Naive thymus-derived CD8-positive, alpha-beta T cell (primary cell): ENCODE measurements at regions of chr3 and their contacts with region 1.

Region 1: GRCh38 chr3:186930641-186931531 is 560 bp downstream of the ST6GAL1 start:
- DNase-seq: peak; percentile 41 to 84 (median 65)
- ATAC-seq: peak; percentile 80
- H3K4me3 Mint-ChIP-seq: peak overlapping the region; percentile 95 to 100 (median 99)
- H3K27ac Mint-ChIP-seq: peak overlapping the region; percentile 93 to 97 (median 96)
- H3K4me1 Mint-ChIP-seq: peaks cover 26 to 51% (median 43%) of the 10 kb centered on the region in 4 donors
- H3K27me3 Mint-ChIP-seq: no peaks in the 10 kb centered on the region

Region 2: DNA sequence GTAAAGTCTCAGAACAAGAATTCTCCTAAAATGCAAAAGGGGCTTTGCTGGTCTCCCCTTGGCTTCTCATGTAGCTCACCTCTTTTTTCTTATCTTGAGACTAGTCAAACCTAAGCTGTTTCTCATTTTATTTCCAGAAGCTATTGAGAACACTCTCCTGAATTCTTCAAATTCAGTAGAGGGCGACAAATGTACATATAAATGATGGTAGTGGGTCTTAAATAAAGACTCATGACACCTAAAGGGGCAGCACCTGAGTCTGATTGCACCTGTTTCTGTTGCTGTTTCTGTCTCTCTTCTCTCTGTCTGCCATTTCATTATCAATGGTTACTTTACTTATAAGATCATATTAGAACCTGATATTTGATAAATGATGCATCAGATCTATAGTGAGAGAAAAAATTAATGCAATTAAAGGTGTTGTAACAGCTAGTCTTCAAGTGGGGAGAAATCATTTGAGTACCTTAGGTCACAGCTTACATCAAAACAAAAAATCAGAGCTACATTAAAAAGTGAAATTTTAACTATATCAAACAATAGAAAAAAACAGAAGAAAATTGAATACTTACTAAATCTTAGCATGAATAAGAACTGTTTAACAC is 81.4 kb before region 1 on chr3:
- POLR2A ChIA-PET with region 1: interaction called, 58 read pairs
- DNase-seq: peak in 5 of 10 donors; percentile 13 to 77 (median 60)
- ATAC-seq: peak; percentile 99 to 100
- H3K4me3 Mint-ChIP-seq: peak overlapping the region in 1 of 10 donors; percentile 41
- H3K27ac Mint-ChIP-seq: peak overlapping the region in 6 of 10 donors; percentile 51 to 84 (median 71)
- H3K4me1 Mint-ChIP-seq: peaks cover 12 to 29% (median 19%) of the 10 kb centered on the region in 4 donors
- H3K27me3 Mint-ChIP-seq: peaks cover 0 to 6% (median 5%) of the 10 kb centered on the region in 5 donors

Region 3: DNA sequence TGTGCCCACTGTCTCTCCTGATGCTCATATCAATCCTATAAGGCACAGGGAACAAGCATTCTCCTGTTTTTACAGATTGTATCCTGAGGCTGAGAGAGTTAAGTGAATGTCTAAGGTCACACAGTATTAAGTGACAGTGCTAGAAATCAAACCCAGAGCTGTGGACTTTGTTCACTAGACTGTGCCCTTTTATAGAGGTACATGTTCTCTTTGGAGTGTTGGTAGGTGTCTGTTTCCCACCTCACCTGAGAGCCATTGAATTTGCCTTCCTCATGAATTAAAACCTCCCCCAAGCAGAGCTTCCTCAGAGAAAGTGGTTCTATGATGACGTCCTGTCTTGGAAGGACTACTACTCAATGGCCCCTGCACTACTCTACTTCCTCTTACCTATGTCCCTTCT is 75.9 kb before region 1 on chr3:
- POLR2A ChIA-PET with region 1: interaction called, 58 read pairs
- DNase-seq: no peak
- ATAC-seq: no peak
- H3K4me3 Mint-ChIP-seq: no peak overlapping the region
- H3K27ac Mint-ChIP-seq: peak overlapping the region in 2 of 10 donors; percentile 17 to 54
- H3K4me1 Mint-ChIP-seq: peaks cover 10 to 21% (median 16%) of the 10 kb centered on the region in 4 donors
- H3K27me3 Mint-ChIP-seq: no peaks in the 10 kb centered on the region

Region 4: DNA sequence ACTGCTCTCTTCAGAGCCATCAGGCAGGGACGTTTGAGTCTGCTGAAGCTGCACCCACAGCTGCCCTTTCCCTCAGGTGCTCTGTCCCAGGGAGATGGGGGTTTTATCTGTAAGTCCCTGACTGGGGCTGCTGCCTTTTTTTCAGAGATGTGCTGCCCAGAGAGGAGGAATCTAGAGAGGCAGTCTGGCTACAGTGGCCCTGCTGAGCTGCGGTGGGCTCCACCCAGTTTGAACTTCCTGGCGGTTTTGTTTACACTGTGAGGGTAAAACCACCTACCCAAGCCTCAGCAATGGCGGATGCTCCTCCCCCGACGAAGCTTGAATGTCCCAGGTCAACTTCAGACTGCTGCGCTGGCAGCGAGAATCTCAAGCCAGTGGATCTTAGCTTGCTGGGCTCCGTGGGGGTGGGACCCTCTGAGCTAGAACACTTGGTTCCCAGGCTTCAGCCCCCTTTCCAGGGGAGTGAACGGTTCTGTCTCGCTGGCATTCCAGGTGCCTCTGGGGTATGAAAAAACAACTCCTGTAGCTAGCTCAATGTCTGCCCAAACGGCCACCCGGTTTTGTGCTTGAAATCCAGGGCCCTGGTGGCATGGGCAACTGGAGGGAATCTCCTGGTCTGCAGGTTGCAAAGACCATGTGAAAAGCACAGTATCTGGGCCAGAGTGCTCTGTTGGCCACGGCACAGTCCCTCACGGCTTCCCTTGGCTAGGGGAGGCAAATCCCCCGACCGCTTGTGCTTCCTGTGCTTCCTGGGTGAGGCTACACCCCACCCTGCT is 21.6 kb before region 1 on chr3:
- POLR2A ChIA-PET with region 1: interaction called, 98 read pairs
- DNase-seq: peak; percentile 25 to 88 (median 76)
- ATAC-seq: peak; percentile 96 to 97
- H3K4me3 Mint-ChIP-seq: peak overlapping the region; percentile 60 to 84 (median 74)
- H3K27ac Mint-ChIP-seq: peak overlapping the region; percentile 88 to 97 (median 92)
- H3K4me1 Mint-ChIP-seq: peaks cover 11 to 49% (median 37%) of the 10 kb centered on the region in 4 donors
- H3K27me3 Mint-ChIP-seq: no peaks in the 10 kb centered on the region

Region 5: GRCh38 chr3:186915806-186916796 is 14.8 kb before region 1 on chr3:
- POLR2A ChIA-PET with region 1: interaction called, 98 read pairs
- DNase-seq: peak in 1 of 10 donors; percentile 6
- ATAC-seq: peak; percentile 57 to 59
- H3K4me3 Mint-ChIP-seq: peak overlapping the region in 9 of 10 donors; percentile 9 to 83 (median 58)
- H3K27ac Mint-ChIP-seq: peak overlapping the region; percentile 3 to 71 (median 48)
- H3K4me1 Mint-ChIP-seq: peaks cover 28 to 58% (median 54%) of the 10 kb centered on the region in 4 donors
- H3K27me3 Mint-ChIP-seq: no peaks in the 10 kb centered on the region

Region 6: DNA sequence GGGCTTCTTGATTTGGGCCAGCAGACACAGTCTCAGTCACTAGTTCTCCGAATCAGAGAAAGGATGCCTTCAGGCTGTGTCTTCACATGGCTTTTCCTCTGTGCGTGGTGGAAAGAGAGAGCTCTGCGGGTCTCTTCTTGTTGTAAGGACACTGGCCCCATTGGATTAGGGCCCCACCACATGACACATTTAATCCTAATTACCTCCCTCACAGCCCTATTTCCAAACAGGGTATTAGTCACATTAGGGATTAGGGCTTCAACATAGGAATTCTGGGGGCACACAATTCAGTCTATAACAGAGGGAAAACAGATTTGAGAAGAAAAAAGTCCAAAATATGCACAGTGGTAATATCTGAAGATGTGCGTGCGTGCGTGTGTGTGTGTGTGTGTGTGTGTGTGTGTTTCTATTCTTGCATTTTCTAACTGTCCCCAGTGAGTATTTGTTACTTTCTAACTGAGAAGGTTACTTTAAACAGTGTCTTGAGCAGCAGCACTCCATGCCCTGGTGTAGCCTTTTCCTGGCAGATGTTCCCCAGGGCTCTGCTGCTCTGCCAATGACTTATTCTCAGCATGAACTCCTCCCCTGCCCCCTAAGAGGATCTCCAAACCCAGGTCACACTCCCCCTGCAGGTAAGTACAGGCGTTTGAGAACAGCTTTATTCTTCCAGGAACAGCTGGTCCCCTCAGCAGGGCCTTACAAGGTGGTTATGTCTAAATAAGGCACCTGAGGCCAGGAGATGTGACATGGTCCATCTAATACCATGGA is 135.5 kb after region 1 on chr3:
- POLR2A ChIA-PET with region 1: interaction called, 12 read pairs
- DNase-seq: peak in 9 of 10 donors; percentile 12 to 81 (median 54)
- ATAC-seq: peak; percentile 81 to 89
- H3K4me3 Mint-ChIP-seq: peak overlapping the region in 6 of 10 donors; percentile 23 to 57 (median 40)
- H3K27ac Mint-ChIP-seq: peak overlapping the region; percentile 79 to 95 (median 90)
- H3K4me1 Mint-ChIP-seq: peaks cover 40 to 85% (median 76%) of the 10 kb centered on the region in 4 donors
- H3K27me3 Mint-ChIP-seq: no peaks in the 10 kb centered on the region